Right ventricle myocardium superior (tissue), 1 donor: ENCODE measurements at regions of chr6 and their contacts with region 1.

Region 1: GRCh38 chr6:31546962-31547726 is at the start of gene NFKBIL1:
- DNase-seq: peak; percentile 97
- ATAC-seq: peak; percentile 98
- total RNA-seq, gene NFKBIL1: 9.2 TPM

Region 2: GRCh38 chr6:31317036-31317435 is 230.1 kb before region 1 on chr6:
- intact Hi-C with region 1: no loop called
- DNase-seq: no peak
- ATAC-seq: no peak

Region 3: GRCh38 chr6:31580807-31581433 is 33.8 kb after region 1 on chr6:
- intact Hi-C with region 1: loop called (anchors 5 kb)
- DNase-seq: peak; percentile 96
- ATAC-seq: peak; percentile 99

Region 4: GRCh38 chr6:31597006-31597405 is 49.9 kb after region 1 on chr6:
- intact Hi-C with region 1: loop called (anchors 2 kb)
- DNase-seq: no peak
- ATAC-seq: peak; percentile 62

Region 5: DNA sequence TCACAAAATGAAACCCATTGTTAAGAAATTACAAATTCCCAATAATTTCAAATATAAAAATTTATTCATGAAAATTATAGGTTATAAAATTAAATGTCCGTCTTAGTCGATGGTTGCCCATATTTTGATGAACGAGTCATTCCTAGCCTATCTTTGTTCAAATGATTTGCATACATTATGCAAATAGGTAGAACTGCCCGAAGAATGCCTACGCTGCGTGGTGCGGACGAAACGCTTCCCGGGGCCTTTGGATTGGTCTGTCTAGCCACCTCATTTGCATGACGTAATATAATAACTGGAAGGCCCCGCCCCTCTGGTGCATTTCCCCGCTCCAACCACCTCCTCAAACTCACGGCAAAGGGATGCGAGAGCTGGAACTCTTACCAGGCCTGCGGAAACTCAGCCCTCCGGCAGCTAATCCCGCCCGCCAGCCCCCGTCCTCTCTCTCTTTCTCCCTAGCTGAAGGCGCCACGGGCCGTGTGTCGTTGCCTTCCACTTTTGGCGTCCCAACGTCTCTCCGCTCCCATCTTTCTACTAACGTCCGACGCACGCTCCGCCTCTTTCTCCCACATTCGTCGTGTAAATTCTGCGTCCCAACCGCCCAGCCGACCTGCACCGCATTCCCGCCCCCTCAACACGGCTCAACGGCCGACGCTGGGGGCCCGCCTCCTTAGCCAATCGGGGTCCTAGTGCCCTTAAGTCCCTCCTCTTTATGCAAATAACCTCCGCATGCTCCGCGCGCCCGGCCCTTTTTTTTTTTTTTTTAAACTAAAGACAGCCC is 72.9 kb after region 1 on chr6:
- intact Hi-C with region 1: loop called (anchors 5 kb)
- DNase-seq: peak; percentile 99
- ATAC-seq: peak; percentile 94